ENCODE measurements at regions of chr11 and their contacts with region 1.

Region 1: DNA sequence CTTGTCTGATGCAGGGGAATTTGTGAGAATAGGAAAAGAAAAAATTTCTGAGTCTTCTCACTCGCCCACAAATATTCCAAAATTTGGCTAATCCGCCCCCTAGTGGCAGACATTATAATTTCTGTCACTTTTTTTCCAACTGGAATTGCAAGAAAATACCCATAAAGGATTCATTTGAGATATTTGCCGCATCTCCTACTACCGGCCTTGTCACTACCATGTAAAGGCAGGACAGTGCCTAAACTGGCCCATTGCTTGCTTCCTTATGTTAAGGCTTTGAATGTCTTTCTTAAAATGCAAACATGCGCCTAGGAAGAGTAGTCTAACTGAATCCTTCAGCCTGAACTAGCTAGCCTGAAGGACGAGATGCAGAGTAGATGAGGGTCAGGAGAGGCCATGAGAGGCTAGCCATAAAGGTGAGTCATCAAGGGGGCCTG is 9.3 kb upstream of the CEP295 start:
- DNase-seq: peak; percentile 13
- H3K27ac ChIP-seq: no peak overlapping the region
- CTCF ChIP-seq: peak; percentile 75

Region 2: GRCh38 chr11:93234602-93235207 is 417.5 kb before region 1 on chr11:
- CTCF ChIA-PET with region 1: interaction called, 16 read pairs
- POLR2A ChIA-PET with region 1: no interaction called
- DNase-seq: peak; percentile 67
- H3K27ac ChIP-seq: no peak overlapping the region
- CTCF ChIP-seq: peak; percentile 83

Region 3: DNA sequence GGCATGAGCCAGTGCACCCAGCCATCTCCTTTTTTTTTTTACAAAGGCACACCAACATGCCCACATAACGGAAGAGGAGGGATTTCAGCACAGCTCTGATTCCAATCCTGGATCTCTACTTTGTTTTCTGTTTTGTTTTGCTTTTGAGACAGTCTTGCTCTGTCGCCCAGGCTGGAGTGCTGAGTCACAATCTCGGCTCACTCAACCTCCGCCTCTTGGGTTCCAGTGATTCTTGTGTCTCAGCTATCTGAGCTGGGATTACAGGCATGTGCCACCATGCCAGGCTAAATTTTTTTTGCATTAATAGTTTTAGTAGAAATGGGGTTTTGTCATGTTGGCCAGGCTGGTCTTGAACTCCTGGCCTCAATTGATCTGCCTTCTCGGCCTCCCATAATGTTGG is 170.2 kb after region 1 on chr11:
- CTCF ChIA-PET with region 1: no interaction called
- POLR2A ChIA-PET with region 1: no interaction called
- DNase-seq: no peak
- H3K27ac ChIP-seq: no peak overlapping the region
- CTCF ChIP-seq: no peak

Measured in RWPE1 (cell line).